Activated CD8-positive, alpha-beta T cell treated with anti-CD3 and anti-CD28 coated beads for 36 hours (primary cell): ENCODE measurements at regions of chr4 and their contacts with region 1.

Region 1: GRCh38 chr4:189792924-189793618 is 147.6 kb upstream of the FRG1 start:
- DNase-seq: peak; percentile 69
- ATAC-seq: peak; percentile 73
- H3K4me3 Mint-ChIP-seq: no peak overlapping the region
- H3K27ac Mint-ChIP-seq: no peak overlapping the region
- H3K4me1 Mint-ChIP-seq: peaks cover 6% of the 10 kb centered on the region
- H3K27me3 Mint-ChIP-seq: peaks cover 6% of the 10 kb centered on the region
- CTCF ChIP-seq: peak; percentile 81

Region 2: GRCh38 chr4:189463734-189464133 is 329.3 kb before region 1 on chr4:
- CTCF ChIA-PET with region 1: no interaction called
- POLR2A ChIA-PET with region 1: no interaction called
- intact Hi-C with region 1: no loop called
- DNase-seq: no peak
- ATAC-seq: no peak
- H3K4me3 Mint-ChIP-seq: no peak overlapping the region
- H3K27ac Mint-ChIP-seq: no peak overlapping the region
- H3K4me1 Mint-ChIP-seq: no peaks in the 10 kb centered on the region
- H3K27me3 Mint-ChIP-seq: no peaks in the 10 kb centered on the region
- CTCF ChIP-seq: no peak

Region 3: DNA sequence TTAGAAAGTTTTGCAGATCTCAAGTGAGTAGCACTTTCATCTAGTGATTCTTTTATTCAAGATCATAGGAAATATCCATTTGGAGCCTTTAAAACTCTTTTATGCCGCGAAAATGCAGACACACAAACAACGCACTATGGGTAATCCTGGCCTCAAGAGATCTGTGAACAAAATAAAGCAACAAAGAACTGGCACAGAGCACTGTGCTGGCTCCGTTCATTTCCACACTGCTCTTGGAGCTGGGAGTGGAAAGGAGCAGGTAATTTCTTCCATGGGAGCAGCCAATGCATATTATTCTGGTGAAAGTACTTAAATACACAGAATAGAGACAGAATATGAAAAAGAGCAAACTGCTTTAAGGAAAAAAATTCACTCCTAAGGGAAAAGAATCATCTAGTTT is 25.1 kb before region 1 on chr4:
- CTCF ChIA-PET with region 1: no interaction called
- POLR2A ChIA-PET with region 1: no interaction called
- intact Hi-C with region 1: no loop called
- DNase-seq: no peak
- ATAC-seq: no peak
- H3K4me3 Mint-ChIP-seq: no peak overlapping the region
- H3K27ac Mint-ChIP-seq: no peak overlapping the region
- H3K4me1 Mint-ChIP-seq: no peaks in the 10 kb centered on the region
- H3K27me3 Mint-ChIP-seq: no peaks in the 10 kb centered on the region
- CTCF ChIP-seq: no peak

Region 4: GRCh38 chr4:189912170-189912569 is 119.1 kb after region 1 on chr4:
- CTCF ChIA-PET with region 1: no interaction called
- POLR2A ChIA-PET with region 1: no interaction called
- intact Hi-C with region 1: loop called (anchors 10 kb)
- DNase-seq: no peak
- ATAC-seq: no peak
- H3K4me3 Mint-ChIP-seq: no peak overlapping the region
- H3K27ac Mint-ChIP-seq: no peak overlapping the region
- H3K4me1 Mint-ChIP-seq: no peaks in the 10 kb centered on the region
- H3K27me3 Mint-ChIP-seq: peaks cover 6% of the 10 kb centered on the region
- CTCF ChIP-seq: peak; percentile 62